Activated naive CD8-positive, alpha-beta T cell treated with anti-CD3 and anti-CD28 coated beads, Interleukin-2, amount 10 ng/mL, durations not matched to agents 7 days and 5 days (primary cell): ENCODE measurements at regions of chr22 and their contacts with region 1.

Region 1: GRCh38 chr22:50525390-50526068 is at the start of gene SCO2:
- DNase-seq: peak; percentile 99
- ATAC-seq: peak; percentile 57
- H3K4me3 Mint-ChIP-seq: peak within 1 kb of the TSS; percentile 96
- H3K27ac Mint-ChIP-seq: peak within 1 kb of the TSS; percentile 95
- H3K4me1 Mint-ChIP-seq: peaks cover 30% of the 10 kb centered on the region
- H3K27me3 Mint-ChIP-seq: no peaks in the 10 kb centered on the region
- total RNA-seq, gene SCO2: 8.1 to 12.8 TPM

Region 2: GRCh38 chr22:50244420-50245213 is 280.9 kb before region 1 on chr22 and contains the start of gene TUBGCP6:
- POLR2A ChIA-PET with region 1: interaction called, 14 read pairs
- DNase-seq: peak; percentile 97
- ATAC-seq: peak; percentile 81
- H3K4me3 Mint-ChIP-seq: peak within 1 kb of the TSS; percentile 99
- H3K27ac Mint-ChIP-seq: peak within 1 kb of the TSS; percentile 99
- H3K4me1 Mint-ChIP-seq: peaks cover 26% of the 10 kb centered on the region
- H3K27me3 Mint-ChIP-seq: no peaks in the 10 kb centered on the region
- total RNA-seq, gene TUBGCP6: 92.2 to 94.5 TPM

Region 3: DNA sequence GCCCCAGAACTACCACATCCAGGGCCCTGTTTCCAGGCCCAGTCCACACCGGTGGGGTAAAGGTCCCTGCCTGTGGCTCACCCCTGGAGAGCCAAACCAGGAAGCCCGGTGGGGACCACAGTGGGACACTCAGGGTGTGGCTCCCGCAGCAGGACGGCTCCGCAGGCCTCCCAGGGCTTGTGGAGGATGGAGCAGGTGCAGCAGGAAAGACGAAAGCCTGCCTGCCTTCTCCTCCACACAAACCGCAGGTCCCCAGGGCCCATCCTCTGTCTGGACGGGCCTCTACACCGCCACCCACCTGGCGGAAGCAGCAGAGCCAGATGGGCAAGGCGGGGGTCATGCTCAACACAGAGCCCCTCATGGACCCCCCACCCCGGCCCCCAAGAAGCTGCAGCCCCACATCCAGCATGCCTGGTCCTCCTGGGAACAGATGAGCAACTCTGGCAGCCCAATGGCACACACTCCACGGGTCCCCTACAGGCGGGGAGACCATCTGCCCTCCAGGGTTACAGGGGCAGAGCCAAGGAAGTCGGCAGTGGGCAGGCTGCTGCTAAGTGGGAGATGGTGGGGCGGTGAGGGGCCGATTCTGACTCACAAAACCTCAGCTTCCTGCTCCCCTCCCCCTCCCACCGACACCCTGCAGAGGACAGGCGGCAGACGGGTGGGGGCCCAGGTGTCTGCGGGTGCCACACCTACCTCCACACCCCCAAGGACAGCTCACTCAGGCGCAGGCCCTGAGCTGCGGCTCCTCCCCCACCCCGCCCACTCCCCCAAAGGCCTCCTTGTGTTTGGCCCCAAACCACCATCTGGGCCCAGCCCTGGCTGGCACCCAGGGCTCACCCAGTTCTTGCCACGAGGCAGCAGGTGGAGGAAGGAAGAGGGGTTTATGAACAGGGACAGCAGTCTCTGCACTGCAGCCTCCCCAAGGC is 55.9 kb before region 1 on chr22:
- POLR2A ChIA-PET with region 1: interaction called, 27 read pairs
- DNase-seq: peak; percentile 91
- ATAC-seq: peak; percentile 77
- H3K4me3 Mint-ChIP-seq: peak overlapping the region; percentile 77
- H3K27ac Mint-ChIP-seq: peak overlapping the region; percentile 92
- H3K4me1 Mint-ChIP-seq: peaks cover 52% of the 10 kb centered on the region
- H3K27me3 Mint-ChIP-seq: no peaks in the 10 kb centered on the region

Region 4: GRCh38 chr22:50537765-50538164 is 12.2 kb after region 1 on chr22:
- POLR2A ChIA-PET with region 1: interaction called, 142 read pairs
- DNase-seq: no peak
- ATAC-seq: no peak
- H3K4me3 Mint-ChIP-seq: peak overlapping the region; percentile 52
- H3K27ac Mint-ChIP-seq: peak overlapping the region; percentile 100
- H3K4me1 Mint-ChIP-seq: peaks cover 62% of the 10 kb centered on the region
- H3K27me3 Mint-ChIP-seq: no peaks in the 10 kb centered on the region

Region 5: GRCh38 chr22:50562523-50563412 is 37.2 kb after region 1 on chr22 and contains the start of gene SYCE3:
- POLR2A ChIA-PET with region 1: interaction called, 127 read pairs
- DNase-seq: peak; percentile 99
- ATAC-seq: peak; percentile 92
- H3K4me3 Mint-ChIP-seq: peak within 1 kb of the TSS; percentile 92
- H3K27ac Mint-ChIP-seq: peak within 1 kb of the TSS; percentile 91
- H3K4me1 Mint-ChIP-seq: peaks cover 14% of the 10 kb centered on the region
- H3K27me3 Mint-ChIP-seq: peaks cover 17% of the 10 kb centered on the region
- total RNA-seq, gene SYCE3: 0.79 to 1.1 TPM

Region 6: DNA sequence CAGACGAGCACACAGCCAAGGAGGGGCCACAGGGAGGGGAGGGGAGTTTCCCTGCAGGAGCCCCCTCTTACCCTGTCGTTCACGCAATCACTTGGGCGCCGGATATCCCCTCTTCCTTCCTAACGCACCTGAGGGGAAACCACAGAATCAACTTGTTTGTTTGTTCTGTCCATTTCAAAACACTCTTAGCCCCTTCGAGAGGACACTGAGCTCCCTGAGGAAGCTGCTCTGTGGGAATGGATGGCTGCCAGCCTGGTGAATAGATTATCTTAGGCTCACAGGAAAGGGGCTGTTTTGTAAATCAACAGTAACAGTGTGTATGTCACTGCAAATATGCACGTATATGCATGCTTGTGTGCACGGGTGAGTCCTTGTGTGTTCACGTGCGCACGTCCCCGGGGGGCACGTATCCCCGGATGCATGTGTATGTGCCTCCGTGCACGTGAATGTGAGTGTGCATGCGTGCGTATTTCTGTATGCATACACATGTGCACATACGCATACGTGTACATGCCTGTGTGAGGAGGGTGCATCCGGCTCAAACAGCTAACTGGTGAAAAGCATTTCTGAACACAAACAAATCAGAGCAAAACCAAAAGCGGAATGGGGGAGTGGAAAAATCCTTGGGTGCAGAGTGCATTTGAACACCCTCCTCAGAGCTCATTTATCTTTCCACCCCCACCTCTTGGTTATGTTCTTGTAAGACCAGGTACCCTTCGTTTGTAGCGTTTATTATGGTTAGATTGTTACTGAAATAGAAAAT is 95.2 kb after region 1 on chr22:
- POLR2A ChIA-PET with region 1: interaction called, 247 read pairs
- DNase-seq: peak; percentile 73
- ATAC-seq: peak; percentile 63
- H3K4me3 Mint-ChIP-seq: peak overlapping the region; percentile 84
- H3K27ac Mint-ChIP-seq: peak overlapping the region; percentile 99
- H3K4me1 Mint-ChIP-seq: peaks cover 42% of the 10 kb centered on the region
- H3K27me3 Mint-ChIP-seq: no peaks in the 10 kb centered on the region